Common myeloid progenitor, CD34-positive (primary cell): ENCODE measurements at regions of chr17 and their contacts with region 1.

Region 1: GRCh38 chr17:73658821-73659515 is 14.7 kb upstream of the SDK2 start:
- DNase-seq: no peak
- H3K4me3 ChIP-seq: no peak overlapping the region
- H3K27ac ChIP-seq: no peak overlapping the region
- H3K4me1 ChIP-seq: peaks cover 0 to 3% (median 0%) of the 10 kb centered on the region in 4 experiments
- H3K27me3 ChIP-seq: peaks cover 0 to 2% (median 0%) of the 10 kb centered on the region in 5 experiments

Region 2: DNA sequence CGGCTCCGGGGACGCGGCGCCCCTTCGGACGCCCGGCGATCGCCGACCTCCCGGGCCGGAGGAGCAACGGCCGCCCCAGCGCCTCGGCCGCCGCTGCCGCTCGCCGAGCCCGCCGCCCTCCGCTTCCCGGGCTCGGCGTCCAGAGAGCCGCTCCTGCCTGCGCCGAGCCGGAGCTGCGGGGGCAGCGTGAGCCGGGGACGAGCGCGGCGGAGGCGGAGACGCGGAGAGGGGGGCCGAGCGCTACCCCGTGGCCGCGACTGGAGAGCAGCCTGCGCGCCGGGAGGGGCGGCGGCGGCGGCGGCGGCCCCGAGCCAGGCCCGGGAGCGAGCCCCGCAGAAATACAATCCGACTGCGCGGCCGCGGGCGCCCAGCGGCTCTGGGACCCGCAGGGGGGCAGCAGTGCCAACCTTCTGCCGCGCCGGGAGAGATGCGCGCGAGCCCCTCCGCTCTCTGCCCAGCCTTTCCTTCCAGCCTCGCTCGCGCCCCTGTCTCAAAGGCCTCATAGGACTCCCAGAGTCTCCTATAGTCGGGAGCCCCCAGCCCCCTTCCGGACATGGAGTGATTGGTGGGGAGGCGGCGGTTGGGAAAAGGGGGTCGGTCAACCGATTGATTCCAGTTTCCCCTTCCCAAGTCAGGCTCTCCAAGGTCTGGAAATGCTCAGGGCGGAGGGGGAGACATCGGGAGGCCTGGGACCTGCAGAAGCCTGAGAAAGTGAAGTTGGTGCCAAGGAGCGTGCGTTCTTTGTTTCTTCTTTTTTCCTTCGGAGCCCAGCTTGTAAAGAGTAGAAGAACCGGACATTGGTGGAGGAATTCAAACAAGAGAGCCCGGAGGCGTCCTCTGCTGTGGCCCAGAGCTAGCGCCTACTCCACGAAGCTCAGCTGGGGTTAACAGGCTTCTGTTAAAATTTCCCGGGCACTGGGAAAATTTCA is 13.7 kb before region 1 on chr17:
- CTCF ChIA-PET with region 1: interaction called, 10 read pairs
- POLR2A ChIA-PET with region 1: no interaction called
- DNase-seq: peak; percentile 63 to 84 (median 78)
- H3K4me3 ChIP-seq: peak overlapping the region; percentile 5 to 83 (median 71)
- H3K27ac ChIP-seq: no peak overlapping the region
- H3K4me1 ChIP-seq: peaks cover 2 to 36% (median 23%) of the 10 kb centered on the region in 4 experiments
- H3K27me3 ChIP-seq: peaks cover 0 to 51% (median 7%) of the 10 kb centered on the region in 5 experiments